ENCODE measurements at regions of chrX and their contacts with region 1.

Region 1: DNA sequence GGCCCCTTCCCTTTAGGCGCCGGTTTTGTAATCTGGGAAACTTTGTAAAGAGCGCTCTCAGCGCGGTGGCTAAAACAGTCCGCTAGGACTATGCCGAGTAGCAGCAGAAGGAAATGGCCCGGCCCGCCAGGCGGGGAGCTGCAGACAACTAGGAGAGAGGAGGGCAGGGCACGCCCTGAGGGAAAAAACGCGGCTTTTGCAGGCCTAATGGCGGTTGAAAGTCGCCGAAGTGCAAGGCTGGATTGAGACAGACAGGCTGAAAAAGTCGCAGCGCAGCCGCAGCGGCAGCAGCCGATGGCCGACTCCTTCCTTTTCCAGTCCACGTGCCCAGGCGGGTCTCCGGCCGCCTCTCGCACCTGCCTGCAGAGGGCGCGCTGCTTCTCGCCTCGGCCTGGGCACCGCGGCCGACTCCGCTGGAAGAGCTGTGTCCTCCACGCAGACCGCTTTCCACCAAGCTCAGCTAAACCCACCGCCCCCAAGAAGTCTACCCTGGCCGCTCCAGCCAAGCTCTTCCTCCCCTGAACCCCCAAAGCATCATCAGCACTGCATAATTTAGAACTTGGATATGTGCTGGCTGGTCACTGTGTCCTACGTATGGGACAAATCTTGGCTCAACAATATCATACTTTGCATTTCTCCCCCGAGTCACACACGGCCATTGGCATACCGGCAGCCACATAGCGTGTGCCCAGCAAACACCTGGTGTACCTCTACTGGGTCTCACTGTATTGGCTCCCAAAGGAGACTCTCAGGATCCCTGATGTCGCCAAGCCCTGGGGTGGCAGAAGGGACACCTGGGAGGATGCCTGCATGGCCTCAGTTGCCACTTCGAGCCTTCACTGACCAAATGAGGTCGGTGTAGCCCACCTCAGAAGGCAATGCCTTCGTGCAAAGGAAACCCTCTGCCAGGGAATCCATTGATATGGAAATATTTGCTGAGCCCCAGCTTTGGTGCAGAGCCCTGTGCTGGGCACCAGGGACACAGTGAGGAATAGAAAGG is 14.5 kb downstream of the SLC25A5 start:
- DNase-seq: peak; percentile 36 to 80 (median 51)
- ATAC-seq: peak; percentile 87
- H3K4me3 ChIP-seq: peak overlapping the region; percentile 54
- H3K4me3 Mint-ChIP-seq: peak overlapping the region; percentile 70
- H3K27ac ChIP-seq: no peak overlapping the region
- H3K27ac Mint-ChIP-seq: peak overlapping the region; percentile 47
- H3K4me1 ChIP-seq: peaks cover 13% of the 10 kb centered on the region
- H3K4me1 Mint-ChIP-seq: peaks cover 10% of the 10 kb centered on the region
- H3K27me3 ChIP-seq: no peaks in the 10 kb centered on the region
- H3K27me3 Mint-ChIP-seq: no peaks in the 10 kb centered on the region
- CTCF ChIP-seq: peak; percentile 66

Region 2: DNA sequence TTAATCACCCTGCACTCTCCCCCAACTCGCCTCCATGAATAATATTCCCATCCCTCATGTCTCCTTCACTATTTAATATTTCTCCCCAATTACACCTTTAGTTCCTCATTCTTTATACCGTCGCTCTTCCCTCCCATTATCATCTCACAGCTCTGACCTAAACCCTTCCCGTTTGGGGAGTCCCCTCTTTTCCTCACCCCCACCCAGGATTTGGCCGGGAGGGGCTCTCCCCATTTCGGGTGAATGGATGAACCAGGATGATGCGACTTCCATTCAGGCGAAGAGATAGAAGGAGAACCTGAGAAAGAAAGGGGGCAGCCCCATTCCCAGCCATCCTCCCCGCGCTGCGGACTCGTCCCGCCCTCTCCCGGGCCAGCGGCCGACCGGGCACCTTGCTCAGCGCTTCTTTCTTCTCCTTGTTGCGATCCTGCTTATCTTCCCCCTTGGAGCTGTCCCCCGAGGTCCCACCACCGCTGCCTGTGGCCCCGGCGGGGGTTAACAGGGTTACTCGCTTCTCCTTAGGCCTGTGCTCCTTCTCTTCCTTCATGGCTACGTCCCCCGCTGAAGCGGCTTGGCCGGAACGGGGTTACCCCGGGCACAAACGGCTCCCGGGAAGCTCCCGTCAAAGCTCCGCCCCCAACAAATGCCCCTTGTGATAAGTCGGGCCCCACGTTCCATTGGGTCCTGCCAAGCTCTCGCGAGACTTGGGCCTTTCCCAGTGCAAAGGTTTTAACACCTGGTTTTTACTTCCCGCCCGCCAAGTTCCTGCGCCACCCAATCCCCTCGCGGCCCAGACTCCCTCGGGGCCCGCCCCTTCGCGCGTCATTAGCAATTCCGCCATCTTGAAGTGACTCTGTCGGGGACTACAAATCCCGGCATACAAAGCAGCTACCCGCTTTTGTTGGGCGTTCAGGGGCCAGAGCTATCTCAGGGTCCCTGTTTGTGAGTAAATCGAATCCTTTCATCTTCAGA is 369.9 kb after region 1 on chrX and contains the start of gene UPF3B:
- CTCF ChIA-PET with region 1: no interaction called
- POLR2A ChIA-PET with region 1: no interaction called
- intact Hi-C with region 1: loop called in 1 of 2 experiments (anchors 5 kb)
- DNase-seq: peak; percentile 82 to 98 (median 90)
- ATAC-seq: peak; percentile 98
- H3K4me3 ChIP-seq: peak within 1 kb of the TSS; percentile 95
- H3K4me3 Mint-ChIP-seq: peak within 1 kb of the TSS; percentile 99
- H3K27ac ChIP-seq: peak within 1 kb of the TSS; percentile 82 to 93
- H3K27ac Mint-ChIP-seq: peak within 1 kb of the TSS; percentile 94
- H3K4me1 ChIP-seq: peaks cover 10% of the 10 kb centered on the region
- H3K4me1 Mint-ChIP-seq: peaks cover 22% of the 10 kb centered on the region
- H3K27me3 ChIP-seq: no peaks in the 10 kb centered on the region
- H3K27me3 Mint-ChIP-seq: no peaks in the 10 kb centered on the region
- CTCF ChIP-seq: no peak
- total RNA-seq, gene UPF3B: 4.7 to 5.7 TPM